Motor neuron (in vitro differentiated cells): ENCODE measurements at regions of chr1 and their contacts with region 1.

Region 1: GRCh38 chr1:101288491-101288944 is 51.7 kb downstream of the S1PR1 start:
- ATAC-seq: peak; percentile 84 to 99 (median 91)
- H3K4me3 ChIP-seq: no peak overlapping the region
- H3K27ac ChIP-seq: no peak overlapping the region
- H3K4me1 ChIP-seq: peaks cover 7 to 13% of the 10 kb centered on the region in 2 donors

Region 2: GRCh38 chr1:100921109-100921706 is 367.3 kb before region 1 on chr1:
- in situ Hi-C with region 1: loop called in 6 of 9 experiments (anchors 10 to 25 kb)
- ATAC-seq: no peak
- H3K4me3 ChIP-seq: no peak overlapping the region
- H3K27ac ChIP-seq: no peak overlapping the region
- H3K4me1 ChIP-seq: no peaks in the 10 kb centered on the region

Region 3: DNA sequence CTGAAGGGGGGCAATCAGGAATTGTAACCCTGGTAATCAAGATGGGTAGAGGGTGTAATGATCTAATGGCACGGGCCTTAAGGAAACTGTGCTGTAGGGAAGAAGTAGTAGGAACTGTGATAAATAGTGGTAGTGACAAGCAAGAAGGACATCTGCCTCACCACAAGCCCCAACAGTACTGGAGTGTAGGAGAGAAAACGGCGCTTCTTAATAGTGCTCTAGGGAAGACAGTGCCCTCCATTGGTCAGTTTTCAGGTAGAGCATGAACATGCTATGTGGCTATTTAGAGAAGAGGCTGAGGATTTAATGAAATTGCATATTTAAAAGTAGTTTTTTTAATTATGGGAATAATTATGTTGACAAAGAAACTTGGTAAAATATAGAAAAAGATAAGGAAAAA is 360.4 kb before region 1 on chr1:
- in situ Hi-C with region 1: loop called in 6 of 9 experiments (anchors 10 to 25 kb)
- ATAC-seq: no peak
- H3K4me3 ChIP-seq: no peak overlapping the region
- H3K27ac ChIP-seq: no peak overlapping the region
- H3K4me1 ChIP-seq: no peaks in the 10 kb centered on the region

Region 4: GRCh38 chr1:101002551-101002950 is 286.0 kb before region 1 on chr1:
- in situ Hi-C with region 1: loop called in 1 of 9 experiments (anchors 25 kb)
- ATAC-seq: peak in 7 of 8 experiments; percentile 47 to 85 (median 56)
- H3K4me3 ChIP-seq: no peak overlapping the region
- H3K27ac ChIP-seq: no peak overlapping the region
- H3K4me1 ChIP-seq: peaks cover 3 to 14% of the 10 kb centered on the region in 2 donors

Region 5: GRCh38 chr1:101388904-101389546 is 100.5 kb after region 1 on chr1:
- in situ Hi-C with region 1: no loop called
- ATAC-seq: peak in 7 of 8 experiments; percentile 59 to 79 (median 65)
- H3K4me3 ChIP-seq: no peak overlapping the region
- H3K27ac ChIP-seq: no peak overlapping the region
- H3K4me1 ChIP-seq: no peaks in the 10 kb centered on the region